ENCODE measurements at regions of chr9 and their contacts with region 1.

Region 1: GRCh38 chr9:2857564-2858198 is 13.8 kb upstream of the PUM3 start:
- DNase-seq: peak; percentile 40 to 65
- H3K4me3 ChIP-seq: no peak overlapping the region
- H3K4me3 Mint-ChIP-seq: no peak overlapping the region
- H3K27ac Mint-ChIP-seq: no peak overlapping the region
- H3K4me1 ChIP-seq: no peaks in the 10 kb centered on the region
- H3K4me1 Mint-ChIP-seq: no peaks in the 10 kb centered on the region
- H3K27me3 ChIP-seq: no peaks in the 10 kb centered on the region
- H3K27me3 Mint-ChIP-seq: peaks cover 19% of the 10 kb centered on the region
- CTCF ChIP-seq: peak; percentile 52 to 62

Region 2: DNA sequence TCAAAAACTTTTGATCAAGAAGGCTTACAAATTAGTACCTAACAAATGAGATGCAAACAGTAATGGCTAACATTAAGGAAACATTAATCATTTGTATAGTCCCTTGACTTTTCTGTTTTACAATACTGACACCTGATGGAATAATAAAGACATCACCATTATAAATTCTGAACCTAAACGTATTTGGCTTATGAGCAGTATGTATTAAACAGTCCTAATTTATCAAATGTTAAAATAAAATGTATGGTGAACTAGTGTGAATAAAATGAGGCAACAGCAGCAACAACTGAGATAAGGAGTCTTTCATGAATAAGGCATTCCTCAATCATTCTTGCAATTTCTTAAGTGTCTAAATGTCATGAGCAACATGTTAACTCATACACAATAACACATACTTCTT is 19.8 kb before region 1 on chr9:
- CTCF ChIA-PET with region 1: interaction called, 10 read pairs
- POLR2A ChIA-PET with region 1: no interaction called
- intact Hi-C with region 1: no loop called
- DNase-seq: no peak
- H3K4me3 ChIP-seq: no peak overlapping the region
- H3K4me3 Mint-ChIP-seq: no peak overlapping the region
- H3K27ac Mint-ChIP-seq: no peak overlapping the region
- H3K4me1 ChIP-seq: peaks cover 8% of the 10 kb centered on the region
- H3K4me1 Mint-ChIP-seq: peaks cover 7% of the 10 kb centered on the region
- H3K27me3 ChIP-seq: no peaks in the 10 kb centered on the region
- H3K27me3 Mint-ChIP-seq: no peaks in the 10 kb centered on the region
- CTCF ChIP-seq: no peak

Region 3: DNA sequence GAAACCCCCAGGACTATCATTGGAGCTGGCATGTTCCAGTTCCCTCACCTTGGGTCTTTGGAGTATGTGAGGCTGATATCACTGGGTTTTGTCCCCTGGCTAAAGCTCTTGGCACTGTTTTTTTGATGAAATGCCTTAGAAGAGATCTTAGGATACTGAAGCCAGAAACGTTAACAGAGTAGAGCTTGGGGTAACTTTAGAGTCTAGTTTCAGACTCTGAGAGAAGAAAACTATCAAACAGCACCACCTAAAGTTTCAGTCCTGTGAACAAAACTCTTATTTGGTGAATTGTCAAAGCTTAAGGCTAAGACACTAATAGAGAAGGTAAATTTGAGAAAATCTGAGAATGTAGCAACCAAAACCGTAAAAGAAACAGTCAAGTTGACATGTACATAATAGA is 97.9 kb after region 1 on chr9:
- CTCF ChIA-PET with region 1: no interaction called
- POLR2A ChIA-PET with region 1: no interaction called
- intact Hi-C with region 1: loop called (anchors 1 kb)
- DNase-seq: no peak
- H3K4me3 ChIP-seq: no peak overlapping the region
- H3K4me3 Mint-ChIP-seq: no peak overlapping the region
- H3K27ac Mint-ChIP-seq: no peak overlapping the region
- H3K4me1 ChIP-seq: no peaks in the 10 kb centered on the region
- H3K4me1 Mint-ChIP-seq: no peaks in the 10 kb centered on the region
- H3K27me3 ChIP-seq: no peaks in the 10 kb centered on the region; the same call in 1 of the 2 replicates
- H3K27me3 Mint-ChIP-seq: peaks cover 9% of the 10 kb centered on the region
- CTCF ChIP-seq: no peak